ENCODE measurements at regions of chr6 and their contacts with region 1.

Region 1: DNA sequence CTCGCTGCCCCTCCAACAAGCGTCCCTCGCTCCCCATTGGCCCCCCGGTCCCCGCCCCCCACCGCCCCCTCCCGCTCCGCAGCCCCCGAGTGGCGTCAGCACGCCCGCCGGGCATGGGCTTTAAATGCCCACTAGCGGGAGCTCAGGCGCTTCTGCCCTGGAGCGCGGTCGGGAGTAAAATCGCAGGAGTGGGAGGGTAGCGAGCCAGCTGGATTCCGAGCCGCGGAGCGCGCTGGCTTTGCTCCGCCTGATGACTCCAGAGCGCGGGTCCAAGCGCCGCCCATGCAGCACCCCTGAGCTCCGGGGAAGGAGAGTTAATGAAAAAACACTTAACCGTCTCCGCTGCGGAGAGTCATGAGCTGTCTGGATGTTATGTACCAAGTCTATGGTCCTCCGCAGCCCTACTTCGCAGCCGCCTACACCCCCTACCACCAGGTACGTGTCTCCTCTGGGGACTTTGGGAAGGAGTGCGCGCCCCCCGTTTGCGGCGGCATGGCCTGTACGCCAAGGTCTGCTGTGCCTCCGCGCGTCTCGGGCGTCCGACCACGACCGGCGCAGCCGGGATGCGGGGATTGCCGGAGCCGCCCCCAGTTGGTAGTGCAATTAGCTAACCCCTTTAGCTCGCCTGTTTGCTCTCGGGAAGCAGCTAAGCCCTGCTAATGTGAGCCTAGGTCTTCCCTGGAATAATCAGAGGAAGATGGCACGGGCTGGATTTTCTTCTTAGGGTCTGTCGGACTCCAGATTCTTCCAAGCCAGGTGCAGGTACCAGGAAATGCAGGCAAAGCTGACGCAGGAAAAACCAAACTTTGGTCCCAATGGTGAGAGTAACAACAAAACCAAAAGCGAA is at the start of gene VGLL2:
- DNase-seq: no peak
- H3K4me3 Mint-ChIP-seq: peak within 1 kb of the TSS; percentile 68
- H3K27ac Mint-ChIP-seq: no peak within 1 kb of the TSS
- H3K4me1 Mint-ChIP-seq: peaks cover 13% of the 10 kb centered on the region
- H3K27me3 Mint-ChIP-seq: peaks cover 86% of the 10 kb centered on the region
- total RNA-seq, gene VGLL2: not detected in 2 replicates

Region 2: DNA sequence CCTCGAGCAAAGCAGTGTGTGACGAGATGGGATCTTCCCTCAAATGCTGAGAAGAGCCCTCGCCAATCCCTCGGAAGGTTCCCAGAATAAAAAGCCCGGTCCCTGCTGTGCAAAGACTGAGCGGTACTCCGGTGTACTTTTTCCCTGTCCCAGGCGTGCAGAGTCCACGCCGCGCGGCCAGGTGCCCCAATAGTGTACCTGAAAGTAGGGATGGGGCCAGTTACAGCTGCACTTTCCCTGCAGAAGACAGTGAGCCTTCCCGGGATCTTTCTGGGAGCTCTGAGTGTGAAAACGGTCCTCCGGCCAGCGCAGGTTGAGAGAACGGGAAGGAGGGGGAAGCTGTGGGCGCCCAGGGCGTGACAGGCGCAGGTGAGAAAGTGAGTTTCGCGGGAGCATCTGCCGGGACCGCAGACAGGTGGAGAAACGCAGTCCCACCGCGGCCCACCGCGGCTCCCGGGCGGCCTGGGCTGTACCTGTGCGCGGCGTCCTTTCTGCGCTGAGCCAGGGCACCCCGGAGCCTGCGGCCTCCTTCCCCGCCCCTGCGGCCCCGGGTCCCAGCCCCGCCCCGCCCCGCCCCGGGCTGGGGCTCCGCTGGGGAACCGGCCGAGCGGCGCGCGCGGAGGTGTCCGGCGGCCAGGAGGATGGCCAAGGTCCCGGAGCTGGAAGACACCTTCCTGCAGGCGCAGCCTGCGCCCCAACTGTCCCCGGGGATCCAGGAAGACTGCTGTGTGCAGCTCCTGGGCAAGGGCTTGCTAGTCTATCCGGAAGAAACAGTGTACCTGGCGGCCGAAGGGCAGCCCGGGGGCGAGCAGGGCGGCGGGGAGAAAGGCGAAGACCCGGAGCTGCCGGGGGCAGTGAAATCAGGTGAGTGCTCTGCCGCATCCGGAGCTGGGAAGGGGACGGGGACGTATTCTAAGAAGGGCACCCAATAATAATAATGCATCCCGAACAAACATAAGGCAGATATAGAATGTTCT is 388.7 kb before region 1 on chr6 and contains the start of gene RFX6:
- intact Hi-C with region 1: loop called (anchors 10 kb)
- DNase-seq: no peak
- H3K4me3 Mint-ChIP-seq: peak within 1 kb of the TSS; percentile 69
- H3K27ac Mint-ChIP-seq: no peak within 1 kb of the TSS
- H3K4me1 Mint-ChIP-seq: peaks cover 2% of the 10 kb centered on the region
- H3K27me3 Mint-ChIP-seq: peaks cover 34% of the 10 kb centered on the region
- total RNA-seq, gene RFX6: not detected in 2 replicates